ENCODE measurements at regions of chr10 and their contacts with region 1.

Region 1: DNA sequence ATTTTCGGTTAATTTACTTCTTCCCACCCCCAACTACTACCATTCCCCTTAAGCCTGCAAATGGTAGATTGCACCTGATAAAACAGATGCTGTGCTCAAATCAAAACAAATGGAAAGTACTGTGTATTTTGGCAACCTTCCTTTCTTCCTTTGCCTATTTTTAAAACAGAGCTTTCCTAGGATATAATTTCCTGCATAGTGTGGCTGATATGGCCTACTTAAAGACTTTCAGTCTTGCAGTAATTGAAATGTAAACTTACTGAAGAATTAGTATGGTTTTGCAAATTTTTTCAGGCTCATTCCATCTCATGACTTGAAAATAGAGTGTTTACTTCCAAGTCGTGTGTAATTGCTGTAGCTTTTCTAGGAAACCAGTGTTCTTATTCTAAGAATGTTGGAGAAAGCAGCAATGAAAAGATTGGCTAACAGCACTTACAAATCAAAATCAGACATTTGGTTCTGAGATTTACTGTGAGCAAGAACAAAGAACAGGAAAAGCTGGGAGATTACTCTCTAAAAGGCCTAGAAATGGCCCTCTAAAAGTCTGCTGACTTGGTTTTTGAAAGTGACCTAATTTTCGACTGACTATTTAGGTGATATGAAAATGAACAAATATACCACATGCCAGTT is 52.0 kb downstream of the REEP3 start:
- DNase-seq: no peak
- H3K4me3 ChIP-seq: peak overlapping the region in 1 of 2 donors; percentile 25
- H3K27ac ChIP-seq: peak overlapping the region; percentile 74 to 76
- H3K4me1 ChIP-seq: peaks cover 6 to 31% of the 10 kb centered on the region in 2 donors
- H3K27me3 ChIP-seq: no peaks in the 10 kb centered on the region
- CTCF ChIP-seq: no peak

Region 2: DNA sequence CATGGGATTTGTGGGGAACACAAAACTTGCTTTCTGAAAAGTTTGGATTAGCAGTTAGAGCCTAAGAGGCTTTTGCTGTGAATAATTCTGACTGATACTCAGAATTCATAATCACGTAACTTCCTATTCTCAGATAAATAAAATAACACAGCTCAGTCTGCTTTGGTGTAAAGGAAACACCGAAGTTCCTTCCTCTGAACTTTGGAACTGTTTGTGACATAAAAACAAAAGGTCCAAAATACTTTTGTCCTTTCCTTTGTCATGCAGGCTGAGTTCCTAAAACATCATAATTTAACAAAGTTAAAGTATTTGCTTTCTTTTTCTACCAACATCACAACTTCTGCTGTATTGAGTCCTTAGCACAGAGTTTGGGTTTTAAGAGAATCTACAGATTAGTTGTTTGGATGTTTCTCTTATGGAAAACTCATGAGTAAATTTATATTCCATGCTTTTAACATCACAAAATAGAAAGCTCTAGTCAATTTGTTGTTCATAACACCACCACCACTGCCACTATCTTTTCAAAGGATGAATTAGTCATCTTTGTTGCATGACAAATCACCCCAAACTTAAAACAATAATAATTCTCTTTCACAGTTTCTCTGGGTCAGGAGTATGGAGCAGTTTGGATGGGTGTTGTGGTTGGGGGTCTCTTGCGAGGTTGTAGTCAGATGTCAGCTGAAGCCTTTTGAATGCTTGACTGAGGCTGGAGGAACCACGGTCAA is 71.4 kb after region 1 on chr10:
- intact Hi-C with region 1: no loop called
- DNase-seq: no peak
- H3K4me3 ChIP-seq: no peak overlapping the region
- H3K27ac ChIP-seq: peak overlapping the region in 1 of 2 donors; percentile 63
- H3K4me1 ChIP-seq: peaks cover 0 to 2% of the 10 kb centered on the region in 2 donors
- H3K27me3 ChIP-seq: no peaks in the 10 kb centered on the region
- CTCF ChIP-seq: no peak

Region 3: DNA sequence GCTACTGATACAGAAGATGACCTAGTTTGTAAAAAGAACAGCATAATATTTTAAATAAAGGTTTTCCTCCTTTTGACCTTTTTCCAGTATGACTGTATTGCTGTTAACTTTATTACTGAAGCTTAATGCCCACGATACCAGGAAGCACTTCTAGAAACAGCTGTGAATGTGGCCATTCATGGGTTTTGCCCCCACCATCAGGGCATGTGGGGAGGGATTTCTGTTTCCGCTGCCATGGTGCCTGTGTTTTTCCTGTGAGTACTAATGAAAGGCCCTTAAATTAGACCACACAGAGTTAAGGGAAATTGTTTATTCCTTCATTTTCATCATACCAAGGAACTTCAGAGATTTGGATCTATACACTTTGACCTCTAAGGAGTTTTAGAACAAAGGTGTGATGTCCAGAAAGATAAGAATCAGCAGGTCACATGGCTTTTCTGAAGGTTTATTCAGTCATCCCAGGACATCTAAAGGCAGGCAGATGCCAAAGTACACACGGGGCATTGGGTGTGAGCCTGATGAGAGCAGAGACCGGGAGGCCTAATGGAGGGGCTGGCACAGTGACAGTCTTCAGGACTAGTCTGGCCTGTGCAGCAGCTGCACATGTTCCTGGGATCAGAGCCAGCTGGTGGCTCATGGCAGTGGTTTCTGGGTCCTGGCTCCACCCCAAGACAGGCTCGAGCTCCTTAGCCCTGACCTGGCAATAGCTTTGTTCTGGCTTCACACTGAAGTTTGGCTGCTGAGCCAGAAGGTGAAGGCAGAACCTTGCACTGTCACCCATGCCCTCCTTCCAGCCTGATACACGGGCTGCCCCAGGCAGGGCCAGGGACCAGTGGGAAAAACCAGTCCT is 138.9 kb after region 1 on chr10:
- intact Hi-C with region 1: loop called (anchors 5 kb)
- DNase-seq: peak; percentile 89 to 98
- H3K4me3 ChIP-seq: peak overlapping the region in 1 of 2 donors; percentile 2
- H3K27ac ChIP-seq: peak overlapping the region; percentile 89 to 91
- H3K4me1 ChIP-seq: peaks cover 8 to 42% of the 10 kb centered on the region in 2 donors
- H3K27me3 ChIP-seq: no peaks in the 10 kb centered on the region
- CTCF ChIP-seq: no peak

Measured in ascending aorta (tissue), 2 donors.